Body of pancreas (tissue), 4 donors: ENCODE measurements at regions of chr7 and their contacts with region 1.

Region 1: DNA sequence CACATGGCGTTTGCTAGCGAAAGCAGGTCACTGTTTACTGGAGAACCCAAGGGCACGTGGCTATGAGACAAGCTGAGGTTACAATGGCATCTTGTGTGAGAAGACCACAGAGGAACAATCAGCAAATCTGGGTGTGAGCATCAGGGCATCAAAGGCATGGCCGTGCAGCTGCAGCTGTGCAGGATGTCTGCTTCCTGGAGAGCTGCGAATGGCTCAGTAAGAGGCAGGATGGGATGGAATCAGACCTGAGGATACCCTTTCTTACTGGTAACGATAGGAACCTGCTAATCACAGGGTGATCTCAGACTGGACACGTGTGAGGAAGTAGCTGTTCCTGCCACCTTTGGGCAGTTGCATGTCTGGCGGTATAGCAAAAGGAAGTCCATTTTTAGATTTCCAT is 119.5 kb downstream of the RNF216 start:
- DNase-seq: no peak
- ATAC-seq: peak; percentile 43
- H3K4me3 ChIP-seq: no peak overlapping the region
- H3K27ac ChIP-seq: no peak overlapping the region
- H3K4me1 ChIP-seq: no peaks in the 10 kb centered on the region
- H3K27me3 ChIP-seq: no peaks in the 10 kb centered on the region
- CTCF ChIP-seq: no peak
- POLR2A ChIP-seq: no peak

Region 2: DNA sequence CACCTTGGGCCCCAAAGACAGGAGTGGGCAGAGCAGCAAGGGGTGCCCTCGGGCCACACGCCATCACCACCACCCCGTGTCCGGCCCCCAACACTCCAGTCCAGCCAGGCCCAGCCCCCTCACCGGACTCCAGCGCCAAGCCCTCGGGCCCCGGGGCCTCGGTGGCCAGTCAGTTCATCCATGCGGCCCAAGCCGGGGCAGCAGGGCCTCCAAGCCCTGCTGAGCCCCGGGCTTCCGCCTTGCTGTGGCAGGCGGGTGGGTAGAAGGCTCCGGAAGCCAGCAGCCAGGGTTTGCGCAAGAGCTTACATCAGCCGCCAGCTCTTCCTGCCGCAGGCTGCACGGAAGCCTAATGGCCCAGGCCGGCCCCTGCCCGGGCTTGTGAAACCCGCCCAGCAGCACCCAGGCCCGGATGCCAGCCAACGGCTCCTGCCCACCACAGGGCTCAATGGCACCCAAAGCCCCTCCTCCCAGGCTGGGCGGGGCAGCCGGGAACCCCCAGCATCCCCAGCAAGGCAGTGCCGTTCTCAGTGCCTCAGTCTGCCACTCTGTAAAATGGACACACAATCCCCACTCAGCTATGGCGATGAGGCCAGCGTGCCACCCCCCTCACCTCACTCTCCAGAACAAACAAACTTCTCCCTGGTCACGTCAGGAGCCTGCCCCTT is 264.8 kb before region 1 on chr7:
- intact Hi-C with region 1: loop called (anchors 5 kb)
- DNase-seq: peak; percentile 52 to 86 (median 70)
- ATAC-seq: peak; percentile 72
- H3K4me3 ChIP-seq: no peak overlapping the region
- H3K27ac ChIP-seq: peak overlapping the region in 3 of 4 donors; percentile 17 to 76 (median 64)
- H3K4me1 ChIP-seq: peaks cover 11% of the 10 kb centered on the region
- H3K27me3 ChIP-seq: no peaks in the 10 kb centered on the region
- CTCF ChIP-seq: no peak
- POLR2A ChIP-seq: peak in 2 of 3 donors; percentile 25 to 36

Region 3: DNA sequence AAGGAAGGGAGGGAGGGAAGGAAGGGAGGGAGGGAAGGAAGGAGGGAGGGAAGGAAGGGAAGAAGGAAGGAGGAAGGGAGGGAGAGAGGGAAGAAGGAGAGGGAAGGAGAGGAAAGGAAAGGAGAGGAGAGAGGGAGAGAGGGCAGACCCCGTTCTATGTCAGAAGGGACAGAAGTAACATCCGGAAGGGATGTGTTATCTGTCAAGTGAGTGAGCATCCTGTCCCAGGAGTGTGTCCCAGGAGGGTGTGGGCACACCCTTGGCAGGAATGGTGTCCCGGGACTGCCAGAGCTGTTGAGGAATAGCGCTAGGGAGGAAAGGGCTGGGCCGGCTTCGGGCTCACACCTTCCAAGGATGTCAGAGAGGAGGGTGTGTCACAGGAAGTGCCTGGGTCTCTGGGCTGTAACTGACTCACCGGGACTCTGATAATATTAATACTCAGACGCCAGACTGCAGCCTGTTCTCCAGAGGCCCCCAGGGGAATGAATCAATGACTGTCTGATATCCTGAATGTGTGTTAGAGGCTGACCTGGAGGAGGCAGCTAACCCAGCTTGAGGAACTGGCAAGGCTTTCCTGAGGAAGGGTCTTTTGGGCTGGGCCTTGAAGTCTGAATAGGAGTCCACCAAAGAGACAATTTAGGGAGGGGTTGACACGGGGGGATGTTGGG is 112.7 kb before region 1 on chr7:
- intact Hi-C with region 1: no loop called
- DNase-seq: peak in 2 of 4 donors; percentile 31 to 49
- ATAC-seq: peak; percentile 11
- H3K4me3 ChIP-seq: no peak overlapping the region
- H3K27ac ChIP-seq: no peak overlapping the region
- H3K4me1 ChIP-seq: peaks cover 9% of the 10 kb centered on the region
- H3K27me3 ChIP-seq: no peaks in the 10 kb centered on the region
- CTCF ChIP-seq: no peak
- POLR2A ChIP-seq: no peak

Region 4: DNA sequence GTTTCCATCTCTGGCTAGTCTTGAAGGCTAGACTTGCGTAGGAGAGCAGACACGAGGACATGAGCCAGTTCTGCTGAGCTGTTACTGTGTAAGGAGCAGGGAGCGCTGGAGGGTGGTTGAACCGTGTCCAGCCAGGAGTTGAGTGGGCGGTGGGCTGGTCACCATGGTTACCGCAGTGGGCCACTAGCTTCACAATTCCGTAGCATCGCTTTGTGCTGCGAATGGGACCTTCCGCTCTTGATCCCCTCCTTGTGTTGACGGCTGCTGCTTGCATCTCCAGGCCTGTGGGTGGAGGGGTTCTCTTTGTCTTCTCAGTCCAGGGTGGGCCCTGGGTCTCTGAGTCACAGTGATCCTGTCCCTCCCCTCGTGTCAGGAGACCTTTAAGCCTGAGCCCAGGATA is 169.3 kb after region 1 on chr7:
- intact Hi-C with region 1: no loop called
- DNase-seq: peak; percentile 8 to 29 (median 16)
- ATAC-seq: no peak
- H3K4me3 ChIP-seq: no peak overlapping the region
- H3K27ac ChIP-seq: no peak overlapping the region
- H3K4me1 ChIP-seq: no peaks in the 10 kb centered on the region
- H3K27me3 ChIP-seq: no peaks in the 10 kb centered on the region
- CTCF ChIP-seq: no peak
- POLR2A ChIP-seq: no peak